Calu3 (cell line): ENCODE measurements at regions of chr7 and their contacts with region 1.

Region 1: DNA sequence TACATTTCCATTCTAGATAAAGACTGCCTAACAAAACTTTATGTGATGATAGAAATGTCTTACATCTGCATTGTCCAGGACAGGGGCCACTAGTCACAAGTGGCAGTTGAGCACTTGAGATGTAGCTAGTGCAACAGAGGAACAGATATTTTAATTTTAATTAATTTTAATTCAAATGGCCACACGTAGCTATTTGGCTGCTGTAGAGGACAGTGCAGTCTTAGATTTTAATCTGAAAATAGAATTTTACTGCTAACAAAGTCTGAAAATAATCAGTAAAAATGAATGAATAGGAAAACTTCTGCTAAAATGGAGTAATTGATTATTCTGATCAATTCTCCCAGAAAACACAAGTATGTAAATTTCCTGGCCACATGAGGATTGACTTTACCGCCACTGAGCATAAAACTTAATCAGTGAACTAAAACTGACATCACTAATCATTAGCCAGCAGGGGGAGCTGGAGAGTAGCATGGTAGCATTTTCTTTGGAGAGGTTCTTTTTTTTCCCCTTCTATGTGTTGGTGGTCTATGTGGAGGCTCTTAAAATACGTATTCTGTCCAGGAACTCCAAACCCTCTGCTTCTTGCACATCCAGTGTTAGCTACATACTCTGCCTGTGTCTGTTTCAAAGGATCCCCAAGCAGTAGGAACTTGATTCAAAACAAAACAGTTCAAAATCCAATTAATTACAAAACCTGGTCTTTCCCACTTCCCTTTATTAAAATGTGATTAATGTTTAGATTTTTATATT is 52.1 kb downstream of the TSPAN12 start:
- DNase-seq: peak; percentile 69
- H3K4me3 Mint-ChIP-seq: no peak overlapping the region
- H3K27ac Mint-ChIP-seq: no peak overlapping the region
- H3K4me1 Mint-ChIP-seq: no peaks in the 10 kb centered on the region
- H3K27me3 Mint-ChIP-seq: no peaks in the 10 kb centered on the region
- CTCF ChIP-seq: peak; percentile 64

Region 2: DNA sequence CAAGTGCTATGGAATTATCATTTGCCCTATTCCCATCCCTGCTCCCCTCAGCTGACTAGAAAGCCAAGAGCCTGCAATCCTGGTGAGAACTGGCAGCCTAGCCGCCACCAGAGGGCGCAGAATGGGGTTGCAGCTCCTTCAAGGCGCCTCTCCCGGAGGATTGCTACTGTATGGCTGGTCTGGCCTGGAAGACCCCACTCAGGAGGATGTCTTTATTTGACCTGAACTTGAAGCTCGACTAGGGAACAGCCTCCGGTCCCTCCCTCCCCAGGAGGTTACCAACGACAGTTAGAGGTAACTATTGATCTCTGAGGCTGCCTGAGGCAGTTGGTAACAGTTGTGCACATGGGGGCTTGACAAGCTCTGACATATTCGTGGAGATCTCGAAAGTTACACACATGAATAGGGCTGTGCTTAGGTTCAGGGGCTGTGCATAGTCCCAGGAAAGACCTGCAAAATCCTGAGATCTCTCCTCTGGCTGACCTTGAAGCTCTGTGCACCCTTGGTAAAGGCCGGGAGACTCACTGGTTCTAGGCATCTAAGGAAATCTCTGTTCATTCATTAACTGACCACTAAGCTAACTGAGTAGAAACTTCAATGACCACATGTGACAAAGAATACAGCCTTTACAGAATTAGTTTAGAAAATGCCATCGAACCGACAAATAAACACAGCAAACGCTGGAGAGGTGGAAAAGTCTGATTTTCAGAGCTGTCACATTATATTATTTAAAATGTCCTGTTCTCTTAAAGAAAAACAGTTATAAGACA is 13.5 kb before region 1 on chr7:
- CTCF ChIA-PET with region 1: interaction called, 10 read pairs
- intact Hi-C with region 1: no loop called
- DNase-seq: peak; percentile 84
- H3K4me3 Mint-ChIP-seq: no peak overlapping the region
- H3K27ac Mint-ChIP-seq: no peak overlapping the region
- H3K4me1 Mint-ChIP-seq: peaks cover 7% of the 10 kb centered on the region
- H3K27me3 Mint-ChIP-seq: no peaks in the 10 kb centered on the region
- CTCF ChIP-seq: peak; percentile 88

Region 3: GRCh38 chr7:120857588-120858573 is 52.1 kb after region 1 on chr7 and contains the start of gene TSPAN12:
- CTCF ChIA-PET with region 1: interaction called, 5 read pairs
- intact Hi-C with region 1: loop called (anchors 2 kb)
- DNase-seq: peak; percentile 82
- H3K4me3 Mint-ChIP-seq: peak within 1 kb of the TSS; percentile 98
- H3K27ac Mint-ChIP-seq: peak within 1 kb of the TSS; percentile 94
- H3K4me1 Mint-ChIP-seq: peaks cover 9% of the 10 kb centered on the region
- H3K27me3 Mint-ChIP-seq: no peaks in the 10 kb centered on the region
- CTCF ChIP-seq: peak; percentile 74
- total RNA-seq, gene TSPAN12: 14.6 and 18.5 TPM in 2 replicates

Region 4: GRCh38 chr7:120941064-120941463 is 135.3 kb after region 1 on chr7:
- CTCF ChIA-PET with region 1: interaction called, 4 read pairs
- intact Hi-C with region 1: loop called (anchors 1 kb)
- DNase-seq: no peak
- H3K4me3 Mint-ChIP-seq: no peak overlapping the region
- H3K27ac Mint-ChIP-seq: no peak overlapping the region
- H3K4me1 Mint-ChIP-seq: no peaks in the 10 kb centered on the region
- H3K27me3 Mint-ChIP-seq: no peaks in the 10 kb centered on the region
- CTCF ChIP-seq: no peak

Region 5: DNA sequence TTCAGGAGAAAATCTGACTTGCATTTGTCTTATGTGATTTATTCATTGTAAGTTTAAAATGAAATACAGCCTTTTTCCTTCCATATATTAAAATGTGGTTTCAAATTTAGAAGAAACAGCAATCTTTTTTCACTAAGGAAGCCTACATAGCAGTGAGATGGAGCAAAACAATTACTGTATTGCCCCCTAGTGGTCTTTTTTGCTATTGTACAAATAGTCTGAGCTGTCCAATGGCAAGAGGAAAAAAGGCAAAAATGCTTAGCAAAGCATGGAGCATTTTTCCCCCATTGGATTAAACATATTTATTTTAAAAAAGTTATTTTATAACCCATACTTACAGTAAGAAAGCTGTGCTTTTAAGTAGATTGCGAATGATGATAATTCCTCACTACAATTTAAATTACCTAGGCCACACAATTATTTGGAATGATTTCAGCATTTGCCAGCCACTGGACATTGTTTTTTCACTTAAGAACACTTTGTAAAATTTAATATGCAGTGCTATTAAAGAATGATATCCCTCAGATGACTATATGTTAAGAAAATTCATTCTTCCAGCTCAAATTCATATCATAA is 302.2 kb after region 1 on chr7:
- CTCF ChIA-PET with region 1: no interaction called
- intact Hi-C with region 1: loop called (anchors 1 kb)
- DNase-seq: peak; percentile 24
- H3K4me3 Mint-ChIP-seq: no peak overlapping the region
- H3K27ac Mint-ChIP-seq: no peak overlapping the region
- H3K4me1 Mint-ChIP-seq: peaks cover 10% of the 10 kb centered on the region
- H3K27me3 Mint-ChIP-seq: no peaks in the 10 kb centered on the region
- CTCF ChIP-seq: peak; percentile 59